ENCODE measurements at regions of chr4 and their contacts with region 1.

Region 1: DNA sequence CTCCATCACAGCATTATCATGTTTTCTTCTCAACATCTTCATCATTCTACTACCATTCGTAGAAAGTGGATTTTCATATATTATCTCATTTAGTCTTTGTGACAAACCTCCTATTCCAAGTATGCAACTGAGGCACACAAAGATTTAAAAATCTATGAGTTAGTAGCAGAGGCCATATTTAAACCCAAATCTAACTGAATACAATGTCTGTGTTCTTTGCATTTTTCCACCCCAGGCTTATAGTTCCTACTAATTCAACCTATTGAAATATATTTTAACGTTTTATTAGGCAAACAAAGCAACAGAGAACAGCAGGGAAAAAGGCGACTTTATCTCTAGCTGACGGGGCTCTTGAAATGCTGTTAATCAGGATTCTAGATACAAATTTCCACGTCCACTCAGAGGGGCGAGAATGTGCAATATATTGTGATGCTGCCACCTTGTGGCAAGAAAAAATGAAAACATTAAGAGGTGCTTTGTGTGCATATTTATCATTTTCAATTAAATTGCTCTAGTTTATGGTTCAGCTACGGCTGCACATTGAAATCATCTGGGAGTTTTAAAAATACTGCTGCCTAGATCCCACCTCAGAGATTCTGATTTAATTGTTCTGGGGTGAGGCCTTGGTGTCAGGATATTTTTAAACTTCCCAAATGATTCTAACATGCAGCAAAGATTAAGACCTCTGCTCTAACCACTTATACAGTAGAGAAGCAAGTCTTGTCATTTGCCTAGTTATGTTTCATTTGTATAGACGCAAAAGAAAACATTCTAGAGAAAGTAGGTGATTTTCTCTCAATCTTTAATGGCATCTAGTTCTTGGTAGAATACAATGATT is 315.9 kb downstream of the MAPK10 start:
- DNase-seq: peak in 2 of 5 donors; percentile 1 to 3
- H3K4me3 ChIP-seq: no peak overlapping the region
- H3K4me3 Mint-ChIP-seq: no peak overlapping the region
- H3K27ac ChIP-seq: no peak overlapping the region
- H3K27ac Mint-ChIP-seq: no peak overlapping the region
- H3K4me1 ChIP-seq: no peaks in the 10 kb centered on the region
- H3K4me1 Mint-ChIP-seq: no peaks in the 10 kb centered on the region
- H3K27me3 ChIP-seq: no peaks in the 10 kb centered on the region
- H3K27me3 Mint-ChIP-seq: peaks cover 0 to 1% of the 10 kb centered on the region in 2 donors

Region 2: GRCh38 chr4:85084380-85085094 is 959.4 kb before region 1 on chr4:
- CTCF ChIA-PET with region 1: no interaction called
- POLR2A ChIA-PET with region 1: no interaction called
- intact Hi-C with region 1: loop called (anchors 5 kb)
- DNase-seq: peak in 1 of 5 donors; percentile 12
- H3K4me3 ChIP-seq: no peak overlapping the region
- H3K4me3 Mint-ChIP-seq: no peak overlapping the region
- H3K27ac ChIP-seq: no peak overlapping the region
- H3K27ac Mint-ChIP-seq: no peak overlapping the region
- H3K4me1 ChIP-seq: no peaks in the 10 kb centered on the region
- H3K4me1 Mint-ChIP-seq: no peaks in the 10 kb centered on the region
- H3K27me3 ChIP-seq: no peaks in the 10 kb centered on the region
- H3K27me3 Mint-ChIP-seq: no peaks in the 10 kb centered on the region

Region 3: DNA sequence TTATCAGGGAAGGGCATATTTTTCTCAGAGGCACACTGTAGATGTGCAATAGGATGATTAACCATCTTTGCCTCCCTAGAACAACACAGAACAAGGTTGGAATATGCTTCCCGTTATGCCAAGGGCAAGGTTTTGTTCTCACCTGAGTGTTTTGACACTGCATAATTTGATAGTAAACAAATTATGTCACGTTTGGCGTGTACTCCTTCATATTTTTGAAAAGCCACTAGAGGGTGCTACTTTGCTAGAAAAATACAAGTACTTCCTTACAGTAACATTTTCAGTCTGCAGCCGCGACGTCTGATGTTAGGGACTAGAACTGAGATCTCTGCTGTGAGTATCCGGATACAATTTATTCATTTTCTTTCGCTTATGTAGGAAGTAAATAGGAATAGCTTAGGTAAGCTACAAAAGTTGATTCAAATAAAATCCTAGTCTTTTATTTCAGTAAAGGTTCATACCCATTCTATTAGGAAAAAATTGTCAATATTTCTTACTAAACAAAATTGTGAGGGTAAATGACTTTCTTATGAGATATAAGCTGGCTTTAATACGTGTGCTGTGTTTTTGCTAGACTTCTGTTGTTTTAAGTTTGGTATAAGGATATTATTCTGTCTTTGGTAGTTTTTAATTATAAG is 896.4 kb before region 1 on chr4:
- CTCF ChIA-PET with region 1: no interaction called
- POLR2A ChIA-PET with region 1: no interaction called
- intact Hi-C with region 1: loop called (anchors 2 kb)
- DNase-seq: peak in 3 of 5 donors; percentile 1 to 5 (median 2)
- H3K4me3 ChIP-seq: no peak overlapping the region
- H3K4me3 Mint-ChIP-seq: no peak overlapping the region
- H3K27ac ChIP-seq: no peak overlapping the region
- H3K27ac Mint-ChIP-seq: no peak overlapping the region
- H3K4me1 ChIP-seq: no peaks in the 10 kb centered on the region
- H3K4me1 Mint-ChIP-seq: peaks cover 0 to 2% (median 0%) of the 10 kb centered on the region in 4 donors
- H3K27me3 ChIP-seq: no peaks in the 10 kb centered on the region
- H3K27me3 Mint-ChIP-seq: peaks cover 2% of the 10 kb centered on the region in 2 donors

Region 4: GRCh38 chr4:86060341-86060740 is 16.4 kb after region 1 on chr4:
- CTCF ChIA-PET with region 1: interaction called, 10 read pairs
- POLR2A ChIA-PET with region 1: no interaction called
- intact Hi-C with region 1: no loop called
- DNase-seq: no peak
- H3K4me3 ChIP-seq: no peak overlapping the region
- H3K4me3 Mint-ChIP-seq: no peak overlapping the region
- H3K27ac ChIP-seq: no peak overlapping the region
- H3K27ac Mint-ChIP-seq: no peak overlapping the region
- H3K4me1 ChIP-seq: no peaks in the 10 kb centered on the region
- H3K4me1 Mint-ChIP-seq: no peaks in the 10 kb centered on the region
- H3K27me3 ChIP-seq: no peaks in the 10 kb centered on the region
- H3K27me3 Mint-ChIP-seq: no peaks in the 10 kb centered on the region

Region 5: GRCh38 chr4:86117705-86118302 is 73.8 kb after region 1 on chr4:
- CTCF ChIA-PET with region 1: no interaction called
- POLR2A ChIA-PET with region 1: no interaction called
- intact Hi-C with region 1: no loop called
- DNase-seq: no peak
- H3K4me3 ChIP-seq: no peak overlapping the region
- H3K4me3 Mint-ChIP-seq: no peak overlapping the region
- H3K27ac ChIP-seq: no peak overlapping the region
- H3K27ac Mint-ChIP-seq: no peak overlapping the region
- H3K4me1 ChIP-seq: no peaks in the 10 kb centered on the region
- H3K4me1 Mint-ChIP-seq: no peaks in the 10 kb centered on the region
- H3K27me3 ChIP-seq: no peaks in the 10 kb centered on the region
- H3K27me3 Mint-ChIP-seq: peaks cover 0 to 1% of the 10 kb centered on the region in 2 donors

Region 6: DNA sequence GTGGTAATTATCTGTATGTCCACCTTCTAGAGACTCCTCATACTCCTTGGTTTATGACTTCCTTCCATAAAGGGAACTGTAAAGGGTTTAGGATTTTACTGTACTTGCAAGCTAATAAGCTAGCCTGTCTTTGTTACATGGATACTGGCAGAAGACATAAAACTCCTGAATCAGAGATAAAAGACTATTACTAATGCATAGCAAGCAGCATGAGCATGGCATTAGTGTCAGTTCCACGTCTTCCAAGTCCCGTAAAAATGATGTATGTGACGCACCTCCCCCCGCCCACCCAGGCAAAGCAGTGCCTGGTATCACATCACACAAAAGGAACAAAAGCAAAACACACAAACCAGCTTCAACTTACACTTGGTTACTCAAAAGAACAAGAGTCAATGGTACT is 734.2 kb after region 1 on chr4:
- CTCF ChIA-PET with region 1: no interaction called
- POLR2A ChIA-PET with region 1: no interaction called
- intact Hi-C with region 1: no loop called
- DNase-seq: no peak
- H3K4me3 ChIP-seq: no peak overlapping the region
- H3K4me3 Mint-ChIP-seq: no peak overlapping the region
- H3K27ac ChIP-seq: no peak overlapping the region
- H3K27ac Mint-ChIP-seq: no peak overlapping the region
- H3K4me1 ChIP-seq: no peaks in the 10 kb centered on the region
- H3K4me1 Mint-ChIP-seq: no peaks in the 10 kb centered on the region
- H3K27me3 ChIP-seq: no peaks in the 10 kb centered on the region
- H3K27me3 Mint-ChIP-seq: peaks cover 0 to 5% of the 10 kb centered on the region in 2 donors

Measured in CD4-positive, alpha-beta memory T cell (primary cell).